ENCODE measurements at regions of chr18 and their contacts with region 1.

Region 1: DNA sequence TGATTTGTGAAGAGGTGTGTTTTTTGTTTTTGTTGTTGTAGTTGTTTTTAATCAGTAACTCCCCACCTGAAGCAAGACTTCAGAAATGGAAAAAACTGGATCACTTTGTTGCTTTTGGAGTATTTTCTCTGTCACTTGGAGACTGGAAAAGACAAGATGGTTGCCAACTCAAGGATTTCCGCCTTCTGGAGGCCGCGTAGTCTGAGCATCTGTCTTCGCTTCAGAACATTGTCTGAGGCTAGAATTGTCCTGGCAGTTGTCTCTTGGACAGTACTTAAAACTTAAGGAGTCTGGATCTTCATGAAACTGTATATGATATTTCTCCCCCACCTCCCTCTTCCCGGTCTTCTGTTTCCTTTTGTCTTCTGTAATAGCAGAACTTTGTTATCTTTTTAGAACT is 67.7 kb downstream of the ARHGAP28 start:
- DNase-seq: no peak
- ATAC-seq: no peak
- H3K4me3 ChIP-seq: peak overlapping the region in 1 of 10 donors; percentile 10
- H3K27ac ChIP-seq: no peak overlapping the region
- H3K4me1 ChIP-seq: no peaks in the 10 kb centered on the region
- H3K27me3 ChIP-seq: no peaks in the 10 kb centered on the region
- CTCF ChIP-seq: no peak

Region 2: GRCh38 chr18:6814882-6815425 is 17.8 kb after region 1 on chr18:
- intact Hi-C with region 1: loop called in 1 of 10 experiments (anchors 2 kb)
- DNase-seq: no peak
- ATAC-seq: no peak
- H3K4me3 ChIP-seq: no peak overlapping the region
- H3K27ac ChIP-seq: no peak overlapping the region
- H3K4me1 ChIP-seq: no peaks in the 10 kb centered on the region
- H3K27me3 ChIP-seq: no peaks in the 10 kb centered on the region
- CTCF ChIP-seq: no peak